Dorsolateral prefrontal cortex (tissue), 120 donors: ENCODE measurements at regions of chr2 and their contacts with region 1.

Region 1: DNA sequence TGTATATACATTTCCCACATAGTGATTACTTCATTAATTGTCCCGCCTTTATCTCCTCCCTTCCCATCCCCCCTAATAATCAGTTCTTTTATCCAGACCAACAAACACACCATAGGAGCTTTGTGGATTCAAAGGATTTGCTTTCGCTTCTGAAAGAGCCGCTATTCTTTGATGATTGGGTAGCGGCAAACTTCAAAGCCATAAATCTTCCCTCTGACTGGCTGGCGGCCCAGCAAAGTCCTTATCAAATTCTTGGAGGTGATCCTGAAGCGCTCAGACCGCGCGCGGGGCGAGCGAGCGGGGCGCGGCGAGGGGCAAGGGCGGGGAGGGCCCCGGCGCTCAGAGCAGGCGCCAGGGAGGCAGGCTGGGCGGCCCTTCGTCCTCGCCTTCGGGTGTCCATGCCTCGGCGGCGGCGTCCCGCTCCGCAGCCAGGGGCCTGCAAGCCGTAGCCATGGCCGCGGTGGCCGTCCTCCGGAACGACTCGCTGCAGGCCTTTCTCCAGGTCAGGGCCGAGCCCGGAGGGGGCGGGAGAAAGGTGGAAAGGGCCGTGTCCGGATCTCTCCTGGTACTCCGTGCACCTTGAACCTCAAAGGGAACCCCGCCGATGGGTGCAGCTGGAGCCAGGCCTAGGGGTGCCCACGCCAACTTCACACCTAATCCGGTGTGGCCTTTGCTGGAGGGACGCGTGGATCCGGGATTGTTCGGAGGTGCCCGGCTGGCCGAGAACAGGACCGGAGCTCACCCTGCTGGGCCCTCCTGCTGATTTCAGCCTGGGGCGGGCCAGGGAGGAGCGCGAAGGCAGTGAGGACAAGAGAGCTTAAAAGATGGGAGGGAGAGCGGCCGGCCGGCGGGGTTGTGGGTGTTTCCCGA is at the start of gene SP5:
- DNase-seq: no peak
- H3K4me3 ChIP-seq: peak within 1 kb of the TSS; percentile 26 to 75 (median 56)
- H3K27ac ChIP-seq: peak within 1 kb of the TSS in 1 of 59 donors; percentile 5
- H3K27me3 ChIP-seq: peaks cover 0 to 100% (median 85%) of the 10 kb centered on the region in 45 donors
- CTCF ChIP-seq: no peak
- total RNA-seq, gene SP5: 0.19 to 4.2 (median 0.61) TPM in 85 of 120 experiments, not detected in the others

Region 2: DNA sequence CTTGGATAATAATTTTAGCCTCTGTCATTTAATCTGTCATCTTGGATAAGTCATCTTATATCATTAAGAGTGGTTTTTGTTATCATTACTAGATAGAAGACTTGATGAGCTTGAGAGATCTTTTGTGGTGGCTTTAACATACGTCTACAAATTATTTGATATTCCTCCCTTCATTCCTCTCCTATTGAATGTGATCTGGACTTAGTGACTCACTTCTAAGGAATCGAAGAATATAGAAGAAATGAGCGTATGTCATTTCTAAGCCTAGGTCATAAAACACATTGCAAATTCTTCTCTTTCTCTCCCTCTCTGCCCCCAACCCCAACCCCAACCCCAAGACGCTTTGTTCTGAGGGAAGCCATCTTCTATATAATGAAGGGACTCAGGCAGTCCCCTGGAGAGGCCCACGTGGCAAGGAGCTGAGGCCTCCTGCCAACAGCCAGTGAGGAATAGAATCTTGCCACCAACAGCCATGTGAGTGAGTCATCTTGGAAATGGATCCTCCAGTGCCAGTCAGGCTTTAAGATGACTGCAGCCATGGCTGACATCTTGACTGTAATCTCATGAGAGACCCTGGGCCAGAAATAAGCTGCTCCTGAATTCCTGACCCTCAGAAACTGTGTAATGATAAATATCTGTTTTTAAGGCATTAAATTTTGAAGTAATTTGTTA is 221.7 kb before region 1 on chr2:
- intact Hi-C with region 1: loop called in 1 of 2 experiments (anchors 10 kb)
- DNase-seq: no peak
- H3K4me3 ChIP-seq: no peak overlapping the region
- H3K27ac ChIP-seq: no peak overlapping the region
- H3K27me3 ChIP-seq: peaks cover 0 to 26% (median 5%) of the 10 kb centered on the region in 45 donors
- CTCF ChIP-seq: no peak

Region 3: GRCh38 chr2:171084128-171084527 is 368.8 kb after region 1 on chr2:
- intact Hi-C with region 1: no loop called
- DNase-seq: no peak
- H3K4me3 ChIP-seq: no peak overlapping the region
- H3K27ac ChIP-seq: no peak overlapping the region
- H3K27me3 ChIP-seq: no peaks in the 10 kb centered on the region
- CTCF ChIP-seq: no peak

Region 4: GRCh38 chr2:171726847-171727450 is 1011.7 kb after region 1 on chr2:
- intact Hi-C with region 1: no loop called
- DNase-seq: no peak
- H3K4me3 ChIP-seq: no peak overlapping the region
- H3K27ac ChIP-seq: peak overlapping the region in 2 of 59 donors; percentile 19 to 26
- H3K27me3 ChIP-seq: no peaks in the 10 kb centered on the region
- CTCF ChIP-seq: no peak